ENCODE measurements at regions of chr7 and their contacts with region 1.

Region 1: DNA sequence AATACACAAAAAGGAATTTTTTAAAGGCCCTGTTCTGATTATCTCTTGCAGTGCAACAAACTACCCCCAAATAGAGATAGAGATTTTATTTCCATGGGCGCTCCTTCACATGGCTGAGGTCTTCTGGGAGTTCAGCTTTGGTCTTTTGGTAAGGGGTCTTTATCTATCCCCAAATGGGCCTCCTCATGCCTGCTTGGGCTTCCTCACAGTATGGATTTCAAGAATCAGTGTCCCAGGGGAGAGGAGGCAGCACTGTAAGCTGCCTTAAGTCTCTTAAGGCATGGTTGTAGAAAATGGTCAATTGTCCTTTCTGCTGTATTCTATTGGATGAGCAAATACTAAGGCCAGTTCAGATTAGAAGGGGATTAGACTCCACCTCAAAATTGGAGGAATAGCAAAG is 966.2 kb downstream of the TYW1 start:
- DNase-seq: no peak
- ATAC-seq: no peak
- H3K4me3 ChIP-seq: no peak overlapping the region
- H3K27ac ChIP-seq: no peak overlapping the region
- H3K4me1 ChIP-seq: no peaks in the 10 kb centered on the region
- H3K27me3 ChIP-seq: no peaks in the 10 kb centered on the region
- CTCF ChIP-seq: no peak

Region 2: DNA sequence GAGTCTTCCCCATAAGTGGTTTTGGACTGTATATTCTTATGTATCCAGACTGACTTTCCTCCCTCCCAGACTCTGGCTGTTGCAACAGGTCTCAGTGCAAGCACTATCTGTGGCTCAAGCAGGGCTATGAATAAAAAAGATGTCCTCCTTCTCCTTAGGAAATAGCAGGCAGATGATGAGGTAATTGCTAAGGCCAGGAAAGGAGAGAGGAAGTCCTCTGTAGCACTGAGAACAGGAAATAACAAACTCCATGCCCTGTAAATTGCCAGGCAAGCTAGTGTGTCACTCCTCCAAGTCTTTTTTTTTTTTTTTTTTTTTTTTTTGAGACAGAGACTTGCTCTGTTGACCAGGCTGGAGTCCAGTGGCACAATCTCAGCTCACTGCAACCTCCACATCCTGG is 66.1 kb before region 1 on chr7:
- CTCF ChIA-PET with region 1: no interaction called
- POLR2A ChIA-PET with region 1: interaction called, 12 read pairs
- in situ Hi-C with region 1: no loop called
- intact Hi-C with region 1: no loop called
- DNase-seq: no peak
- ATAC-seq: no peak
- H3K4me3 ChIP-seq: no peak overlapping the region
- H3K27ac ChIP-seq: no peak overlapping the region
- H3K4me1 ChIP-seq: no peaks in the 10 kb centered on the region
- H3K27me3 ChIP-seq: no peaks in the 10 kb centered on the region
- CTCF ChIP-seq: no peak

Region 3: DNA sequence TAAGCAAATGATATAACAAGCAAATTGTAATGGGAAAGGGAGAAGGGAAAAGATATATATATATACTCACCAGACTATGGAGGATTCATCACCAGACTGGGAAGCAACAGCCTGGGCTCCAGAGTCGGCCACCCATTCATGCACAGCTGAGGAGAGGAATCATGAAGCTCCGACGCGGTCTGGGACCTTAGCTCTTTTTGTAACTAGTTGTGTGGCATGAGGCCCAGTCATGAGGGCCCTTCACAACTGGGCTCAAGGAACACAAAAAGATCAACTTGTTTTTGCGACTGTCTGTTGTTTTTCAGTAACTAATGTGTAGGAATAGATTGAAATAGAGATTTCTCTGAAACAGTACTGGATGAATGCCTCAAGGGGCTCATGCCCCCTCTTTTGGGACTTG is 55.1 kb before region 1 on chr7:
- CTCF ChIA-PET with region 1: no interaction called
- POLR2A ChIA-PET with region 1: no interaction called
- in situ Hi-C with region 1: no loop called
- intact Hi-C with region 1: no loop called
- DNase-seq: no peak
- ATAC-seq: no peak
- H3K4me3 ChIP-seq: no peak overlapping the region
- H3K27ac ChIP-seq: no peak overlapping the region
- H3K4me1 ChIP-seq: no peaks in the 10 kb centered on the region
- H3K27me3 ChIP-seq: no peaks in the 10 kb centered on the region
- CTCF ChIP-seq: no peak

Region 4: DNA sequence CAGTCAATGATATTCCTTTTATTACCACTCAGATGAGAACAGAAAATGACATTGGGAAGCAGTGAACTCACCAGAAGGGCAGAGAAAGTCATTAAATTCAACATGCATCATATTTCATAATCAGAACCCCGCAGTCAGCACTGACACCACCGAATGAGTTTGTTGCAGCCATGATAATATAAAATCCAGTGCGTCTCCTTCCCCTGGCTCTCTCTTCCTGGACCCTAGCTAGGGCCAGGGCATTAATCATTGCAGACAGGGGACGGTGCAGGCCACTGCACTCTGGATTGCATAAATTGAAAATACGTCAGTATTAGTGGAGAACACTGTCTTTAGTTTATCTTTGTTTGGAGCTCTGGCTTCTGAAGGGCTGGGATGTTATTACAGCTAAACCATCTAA is 34.7 kb before region 1 on chr7:
- CTCF ChIA-PET with region 1: no interaction called
- POLR2A ChIA-PET with region 1: no interaction called
- in situ Hi-C with region 1: no loop called
- intact Hi-C with region 1: no loop called
- DNase-seq: no peak
- ATAC-seq: no peak
- H3K4me3 ChIP-seq: no peak overlapping the region
- H3K27ac ChIP-seq: no peak overlapping the region
- H3K4me1 ChIP-seq: no peaks in the 10 kb centered on the region
- H3K27me3 ChIP-seq: no peaks in the 10 kb centered on the region
- CTCF ChIP-seq: no peak

Region 5: GRCh38 chr7:69192134-69192533 is 1229.3 kb after region 1 on chr7:
- CTCF ChIA-PET with region 1: no interaction called
- POLR2A ChIA-PET with region 1: no interaction called
- in situ Hi-C with region 1: no loop called
- intact Hi-C with region 1: no loop called
- DNase-seq: no peak
- ATAC-seq: no peak
- H3K4me3 ChIP-seq: no peak overlapping the region
- H3K27ac ChIP-seq: no peak overlapping the region
- H3K4me1 ChIP-seq: no peaks in the 10 kb centered on the region
- H3K27me3 ChIP-seq: no peaks in the 10 kb centered on the region
- CTCF ChIP-seq: no peak

Measured in Panc1 (cell line).